Dorsolateral prefrontal cortex (tissue), 120 donors: ENCODE measurements at regions of chr20 and their contacts with region 1.

Region 1: GRCh38 chr20:44738813-44739477 is 6.7 kb upstream of the KCNK15 start:
- DNase-seq: peak; percentile 45 to 90 (median 82)
- H3K4me3 ChIP-seq: peak overlapping the region in 52 of 59 donors; percentile 1 to 59 (median 40)
- H3K27ac ChIP-seq: peak overlapping the region in 8 of 59 donors; percentile 7 to 65 (median 44)
- H3K27me3 ChIP-seq: no peaks in the 10 kb centered on the region
- CTCF ChIP-seq: peak in 1 of 56 donors; percentile 24

Region 2: DNA sequence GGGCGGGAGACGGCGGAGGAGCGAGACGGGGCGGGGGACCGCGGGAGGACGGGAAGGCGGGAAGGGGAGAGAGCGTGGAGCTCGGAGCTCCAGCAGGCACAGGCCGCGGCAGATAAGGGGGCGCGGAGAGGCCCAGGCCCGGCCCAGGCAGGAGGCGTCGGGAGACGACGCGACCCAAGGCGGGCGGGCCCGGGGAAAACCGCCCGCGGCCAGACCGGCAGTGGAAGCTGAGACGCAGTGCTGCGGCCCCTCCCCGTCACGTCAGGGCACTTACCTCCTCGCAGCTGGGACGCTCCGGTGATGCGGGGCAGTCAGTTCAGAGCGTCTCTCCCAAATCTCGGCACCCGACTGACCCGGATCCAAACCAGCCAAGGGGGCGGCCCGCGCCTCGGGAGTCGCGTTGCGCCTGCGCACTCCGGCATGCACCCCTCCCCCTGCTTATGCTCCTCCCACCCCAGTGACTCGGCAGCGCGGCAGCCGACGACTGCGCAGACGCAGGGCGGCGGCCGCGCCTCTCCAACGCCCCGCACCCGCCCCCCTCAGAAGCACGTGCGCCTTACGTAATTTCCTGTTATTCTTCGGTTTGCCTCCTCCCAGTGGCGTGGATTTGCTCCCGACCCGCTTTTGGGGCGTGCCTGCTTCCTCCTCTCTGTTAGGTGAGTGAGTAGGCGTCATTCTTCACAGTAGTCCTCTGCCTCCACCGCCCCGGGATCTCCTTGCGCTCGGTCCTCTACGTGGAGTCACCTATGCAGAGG is 528.3 kb before region 1 on chr20 and contains the start of gene OSER1:
- intact Hi-C with region 1: loop called in 1 of 2 experiments (anchors 5 kb)
- DNase-seq: peak; percentile 95 to 98 (median 97)
- H3K4me3 ChIP-seq: peak within 1 kb of the TSS; percentile 75 to 100 (median 96)
- H3K27ac ChIP-seq: peak within 1 kb of the TSS; percentile 67 to 98 (median 92)
- H3K27me3 ChIP-seq: no peaks in the 10 kb centered on the region
- CTCF ChIP-seq: peak in 34 of 56 donors; percentile 7 to 51 (median 30)
- total RNA-seq, gene OSER1: 20.8 to 41.9 (median 29.8) TPM

Region 3: DNA sequence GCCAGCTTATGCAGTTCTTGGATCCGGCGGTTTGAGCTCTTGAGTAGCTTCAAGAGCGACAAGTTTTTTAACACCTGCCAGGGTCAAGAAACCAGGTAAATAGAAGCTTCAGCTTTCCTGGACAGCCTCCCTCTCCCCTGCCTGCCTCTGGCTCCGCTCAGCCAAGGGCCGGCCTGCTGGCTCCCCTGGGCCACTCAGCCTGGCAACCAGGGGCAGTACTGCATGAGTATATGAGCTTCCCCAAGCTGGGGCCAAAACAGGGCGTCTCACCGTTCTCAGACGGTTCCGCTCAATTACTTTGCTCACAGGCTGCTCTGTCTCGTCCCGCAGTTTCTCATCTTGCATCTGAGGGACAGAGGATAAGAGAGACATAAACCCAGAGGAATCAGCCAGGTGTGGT is 638.3 kb after region 1 on chr20:
- intact Hi-C with region 1: no loop called
- DNase-seq: no peak
- H3K4me3 ChIP-seq: no peak overlapping the region
- H3K27ac ChIP-seq: peak overlapping the region in 58 of 59 donors; percentile 56 to 97 (median 90)
- H3K27me3 ChIP-seq: no peaks in the 10 kb centered on the region
- CTCF ChIP-seq: no peak